Ascending aorta (tissue), 2 donors: ENCODE measurements at regions of chr10 and their contacts with region 1.

Region 1: GRCh38 chr10:113650172-113650571 is 13.7 kb downstream of the NRAP start:
- DNase-seq: no peak
- H3K4me3 ChIP-seq: no peak overlapping the region
- H3K27ac ChIP-seq: no peak overlapping the region
- H3K4me1 ChIP-seq: no peaks in the 10 kb centered on the region
- H3K27me3 ChIP-seq: no peaks in the 10 kb centered on the region
- CTCF ChIP-seq: no peak

Region 2: DNA sequence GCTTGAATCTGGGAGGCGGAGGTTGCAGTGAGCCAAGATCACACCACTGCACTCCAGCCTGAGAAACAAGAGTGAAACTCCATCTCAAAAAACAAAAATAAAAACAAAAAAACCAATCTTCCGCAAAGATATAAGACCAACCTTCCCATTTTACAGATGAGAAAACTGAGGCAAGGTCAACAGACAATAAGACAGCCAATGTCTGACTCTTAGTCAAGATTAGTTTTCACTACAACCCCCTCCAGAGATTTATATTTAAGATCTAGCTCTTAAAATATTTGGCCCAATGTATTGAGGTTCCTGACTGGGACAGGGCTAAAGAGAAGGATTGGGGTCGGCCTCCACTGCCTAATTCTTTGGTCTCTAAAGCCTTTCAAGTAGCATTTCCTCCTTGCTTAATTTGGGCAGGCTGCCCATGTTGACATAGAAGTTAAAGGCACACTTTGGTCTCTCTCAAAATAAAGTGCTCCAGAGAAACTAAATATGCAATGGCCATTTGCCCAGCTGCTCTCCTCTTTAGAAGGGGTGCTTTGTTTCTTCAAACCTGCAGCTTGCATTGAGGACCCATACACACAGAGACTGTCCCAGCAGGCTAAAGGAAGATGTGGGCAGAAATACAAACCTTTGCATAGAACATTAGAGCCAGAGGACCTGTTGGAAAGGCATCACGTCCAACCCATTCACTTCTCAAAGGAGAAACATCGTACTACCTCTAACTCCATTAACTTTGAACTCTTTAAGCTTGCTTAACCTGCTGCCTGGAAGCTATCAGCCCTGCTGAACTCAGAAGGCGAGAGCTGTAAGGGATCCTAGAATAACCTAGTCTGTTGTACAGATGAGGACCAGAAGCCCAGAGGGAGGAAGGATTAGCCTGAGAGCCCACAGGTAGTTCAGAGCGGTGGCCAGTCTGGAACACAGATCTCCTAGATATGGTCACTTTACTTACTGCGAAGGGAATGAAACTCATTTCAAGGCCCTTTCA is 1363.0 kb before region 1 on chr10:
- intact Hi-C with region 1: loop called (anchors 10 kb)
- DNase-seq: no peak
- H3K4me3 ChIP-seq: no peak overlapping the region
- H3K27ac ChIP-seq: no peak overlapping the region
- H3K4me1 ChIP-seq: no peaks in the 10 kb centered on the region
- H3K27me3 ChIP-seq: no peaks in the 10 kb centered on the region
- CTCF ChIP-seq: no peak

Region 3: GRCh38 chr10:113616233-113617074 is 33.7 kb before region 1 on chr10:
- intact Hi-C with region 1: no loop called
- DNase-seq: no peak
- H3K4me3 ChIP-seq: no peak overlapping the region
- H3K27ac ChIP-seq: no peak overlapping the region
- H3K4me1 ChIP-seq: no peaks in the 10 kb centered on the region
- H3K27me3 ChIP-seq: no peaks in the 10 kb centered on the region
- CTCF ChIP-seq: peak in 1 of 3 experiments; percentile 24